ENCODE measurements at regions of chr7 and their contacts with region 1.

Region 1: DNA sequence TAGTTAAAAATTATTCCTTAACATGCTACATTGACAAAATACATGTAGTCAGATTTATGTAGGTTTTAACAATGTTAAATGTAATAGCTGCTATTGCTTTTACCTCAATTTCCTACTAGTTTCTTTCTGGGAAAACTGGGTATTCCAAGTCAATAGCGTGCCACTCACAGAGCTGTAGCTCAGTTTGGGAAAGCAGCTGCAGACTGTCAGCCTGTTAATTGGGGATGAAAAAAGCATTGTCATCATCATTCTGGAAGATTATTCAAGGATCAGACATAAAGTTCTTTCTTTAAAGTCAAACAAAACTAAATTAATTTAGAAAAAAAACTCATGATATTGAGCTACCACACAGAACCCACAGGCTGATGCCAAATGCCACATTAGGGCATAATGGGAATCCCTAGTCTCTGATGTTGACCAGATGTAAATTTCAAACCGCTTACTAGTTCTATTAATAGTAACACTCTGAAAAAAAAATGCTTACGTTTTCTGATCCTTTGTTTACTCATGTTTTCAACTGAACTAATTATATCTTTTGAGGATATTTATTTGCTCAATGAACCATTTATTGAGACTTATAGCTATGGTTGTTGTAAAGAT is 19.6 kb upstream of the AGMO start:
- DNase-seq: no peak
- ATAC-seq: peak; percentile 60
- H3K4me3 ChIP-seq: no peak overlapping the region
- H3K27ac ChIP-seq: no peak overlapping the region
- H3K4me1 ChIP-seq: no peaks in the 10 kb centered on the region
- H3K27me3 ChIP-seq: no peaks in the 10 kb centered on the region
- CTCF ChIP-seq: no peak
- EP300 ChIP-seq: no peak
- POLR2A ChIP-seq: no peak
- RAD21 ChIP-seq: no peak

Region 2: GRCh38 chr7:15403751-15404150 is 177.7 kb before region 1 on chr7:
- CTCF ChIA-PET with region 1: no interaction called
- POLR2A ChIA-PET with region 1: no interaction called
- RAD21 ChIA-PET with region 1: no interaction called
- SMC1A ChIA-PET with region 1: no interaction called
- in situ Hi-C with region 1: no loop called
- intact Hi-C with region 1: no loop called
- DNase-seq: no peak
- ATAC-seq: no peak
- H3K4me3 ChIP-seq: no peak overlapping the region
- H3K27ac ChIP-seq: no peak overlapping the region
- H3K4me1 ChIP-seq: no peaks in the 10 kb centered on the region
- H3K27me3 ChIP-seq: no peaks in the 10 kb centered on the region
- CTCF ChIP-seq: no peak
- EP300 ChIP-seq: no peak
- POLR2A ChIP-seq: no peak
- RAD21 ChIP-seq: no peak

Region 3: DNA sequence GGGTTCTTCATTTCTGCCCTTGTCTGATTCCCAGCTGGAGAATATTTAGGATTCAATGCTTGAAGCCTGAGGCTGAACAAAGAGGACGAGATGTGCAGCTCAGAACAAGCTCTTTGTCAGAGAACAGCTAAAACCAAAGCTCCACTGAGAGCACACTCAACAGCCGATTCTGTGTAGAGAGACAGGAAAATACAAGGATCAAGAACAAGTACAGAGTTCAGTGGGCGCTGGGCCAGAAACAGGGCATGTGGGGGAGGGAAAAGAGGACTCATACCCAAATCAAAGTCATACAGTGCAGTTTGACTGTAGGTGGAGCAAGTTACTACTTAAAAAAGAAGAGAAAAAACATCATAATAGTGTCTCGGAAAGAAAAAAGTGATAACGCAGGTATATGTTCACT is 19.6 kb before region 1 on chr7 and contains the start of gene AGMO:
- CTCF ChIA-PET with region 1: interaction called, 25 read pairs
- POLR2A ChIA-PET with region 1: interaction called, 4 read pairs
- RAD21 ChIA-PET with region 1: interaction called, 29 read pairs
- SMC1A ChIA-PET with region 1: interaction called, 26 read pairs
- in situ Hi-C with region 1: no loop called
- intact Hi-C with region 1: no loop called
- DNase-seq: no peak
- ATAC-seq: peak; percentile 37
- H3K4me3 ChIP-seq: no peak within 1 kb of the TSS
- H3K27ac ChIP-seq: no peak within 1 kb of the TSS
- H3K4me1 ChIP-seq: no peaks in the 10 kb centered on the region
- H3K27me3 ChIP-seq: no peaks in the 10 kb centered on the region
- CTCF ChIP-seq: no peak; a peak in 1 of 6 replicates
- EP300 ChIP-seq: no peak
- POLR2A ChIP-seq: no peak
- RAD21 ChIP-seq: no peak
- polyA plus RNA-seq, gene AGMO: 0.29 TPM in 1 of 2 experiments, not detected in the other

Region 4: GRCh38 chr7:15567652-15568051 is 13.8 kb before region 1 on chr7:
- CTCF ChIA-PET with region 1: interaction called, 25 read pairs
- POLR2A ChIA-PET with region 1: no interaction called
- RAD21 ChIA-PET with region 1: interaction called, 29 read pairs
- SMC1A ChIA-PET with region 1: interaction called, 26 read pairs
- in situ Hi-C with region 1: no loop called
- intact Hi-C with region 1: no loop called
- DNase-seq: no peak
- ATAC-seq: no peak
- H3K4me3 ChIP-seq: no peak overlapping the region
- H3K27ac ChIP-seq: no peak overlapping the region
- H3K4me1 ChIP-seq: no peaks in the 10 kb centered on the region
- H3K27me3 ChIP-seq: no peaks in the 10 kb centered on the region
- CTCF ChIP-seq: no peak
- EP300 ChIP-seq: no peak
- POLR2A ChIP-seq: no peak
- RAD21 ChIP-seq: no peak

Region 5: DNA sequence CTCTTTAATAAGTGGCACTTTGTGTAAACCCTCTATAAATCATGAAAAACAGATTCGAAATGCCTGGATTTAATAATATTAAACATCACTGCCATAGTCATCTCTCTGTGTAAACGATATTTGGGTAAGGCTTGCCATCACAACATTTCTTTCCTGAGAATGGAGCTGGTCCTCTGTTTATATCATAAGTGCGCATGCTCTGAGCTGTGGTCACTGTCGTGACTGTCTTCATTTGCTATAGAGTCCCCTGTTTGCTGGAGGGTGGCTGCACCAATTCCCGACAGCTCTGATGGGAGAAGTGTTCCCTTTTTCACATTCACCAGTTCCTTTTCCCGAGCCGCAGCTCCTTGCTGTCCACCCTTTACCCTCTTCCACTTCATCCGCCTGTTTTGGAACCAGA is 30.8 kb after region 1 on chr7:
- CTCF ChIA-PET with region 1: no interaction called
- POLR2A ChIA-PET with region 1: no interaction called
- RAD21 ChIA-PET with region 1: interaction called, 5 read pairs
- SMC1A ChIA-PET with region 1: interaction called, 13 read pairs
- in situ Hi-C with region 1: no loop called
- intact Hi-C with region 1: no loop called
- DNase-seq: no peak
- ATAC-seq: no peak
- H3K4me3 ChIP-seq: no peak overlapping the region
- H3K27ac ChIP-seq: no peak overlapping the region
- H3K4me1 ChIP-seq: no peaks in the 10 kb centered on the region
- H3K27me3 ChIP-seq: no peaks in the 10 kb centered on the region
- CTCF ChIP-seq: no peak
- EP300 ChIP-seq: no peak
- POLR2A ChIP-seq: no peak
- RAD21 ChIP-seq: no peak